ENCODE measurements at regions of chr13 and their contacts with region 1.

Region 1: DNA sequence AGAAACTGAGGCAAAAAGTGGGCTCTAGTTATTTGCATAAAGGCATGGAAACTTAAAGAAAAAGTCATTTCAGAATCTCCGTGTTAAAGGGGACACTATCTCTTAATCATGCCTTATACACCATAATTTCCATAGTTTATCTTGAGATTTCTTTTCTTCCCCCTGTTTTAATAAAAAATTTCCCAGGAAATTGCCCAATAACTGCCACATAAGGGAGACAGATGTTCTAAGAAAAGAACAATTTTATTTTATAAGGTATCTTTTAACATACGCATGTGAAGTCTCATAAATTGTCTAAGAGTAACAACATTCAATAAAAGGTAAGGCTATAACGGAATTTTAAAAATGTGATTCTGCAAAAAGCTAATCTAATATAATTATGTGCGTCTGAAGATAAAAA is 371.3 kb downstream of the IRS2 start:
- DNase-seq: no peak
- H3K27ac ChIP-seq: no peak overlapping the region
- CTCF ChIP-seq: no peak

Region 2: DNA sequence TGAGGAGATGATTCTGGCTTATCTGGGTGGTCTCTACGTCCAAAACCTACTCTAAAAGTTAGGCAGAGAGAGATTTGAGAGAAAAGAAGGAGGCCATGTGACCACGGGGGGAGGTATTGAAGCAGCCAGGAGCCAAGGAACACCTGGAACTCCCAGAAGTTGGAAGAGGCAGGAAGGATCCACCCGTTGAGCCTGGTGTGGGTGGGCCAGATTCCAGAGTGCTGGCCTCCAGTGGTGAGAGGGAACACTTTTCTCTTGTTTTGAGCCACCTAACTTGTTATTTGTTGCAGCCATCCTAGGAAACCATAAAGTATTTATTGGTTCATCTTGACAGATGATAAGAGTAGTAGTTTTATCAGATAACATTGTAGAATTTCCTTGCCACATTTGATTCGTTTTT is 388.8 kb before region 1 on chr13:
- CTCF ChIA-PET with region 1: no interaction called
- POLR2A ChIA-PET with region 1: no interaction called
- DNase-seq: no peak
- H3K27ac ChIP-seq: no peak overlapping the region
- CTCF ChIP-seq: no peak

Region 3: DNA sequence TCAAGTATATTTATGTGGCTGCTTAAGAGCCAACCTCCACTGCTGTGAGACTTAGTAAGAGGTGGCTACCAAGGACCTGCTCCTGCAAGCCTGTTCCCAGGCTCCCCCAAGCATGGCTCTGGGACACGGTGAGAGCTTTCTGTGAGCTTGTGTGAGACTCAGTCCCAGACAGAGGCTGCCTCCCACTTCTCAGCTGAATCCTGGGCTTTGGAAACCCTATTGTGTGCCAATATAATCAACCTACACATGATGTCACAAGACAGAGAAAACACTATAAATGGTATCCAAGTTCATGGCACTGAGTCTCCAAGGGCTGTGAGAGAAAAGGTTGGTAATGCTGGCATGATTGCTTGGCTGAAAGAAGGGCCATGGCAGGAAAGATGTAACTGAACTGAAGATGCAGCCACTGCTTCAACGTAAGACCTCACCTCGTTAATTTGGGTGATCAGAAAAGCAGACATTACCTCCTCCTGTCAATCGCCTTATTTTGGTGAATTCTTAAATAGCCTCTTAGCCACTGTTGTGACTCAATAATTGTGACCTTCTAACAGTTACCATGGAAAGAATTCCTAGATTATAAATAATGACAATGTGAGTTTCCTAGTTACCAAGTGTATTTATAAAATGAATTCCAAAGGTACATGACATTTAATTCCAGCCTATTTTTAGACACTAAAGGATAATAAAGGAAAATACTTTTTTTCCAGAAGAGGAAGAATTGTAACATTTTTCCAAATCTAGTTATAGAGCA is 39.3 kb after region 1 on chr13:
- CTCF ChIA-PET with region 1: interaction called, 10 read pairs
- POLR2A ChIA-PET with region 1: no interaction called
- DNase-seq: no peak
- H3K27ac ChIP-seq: no peak overlapping the region
- CTCF ChIP-seq: no peak

Region 4: GRCh38 chr13:109576309-109576813 is 161.3 kb after region 1 on chr13:
- CTCF ChIA-PET with region 1: no interaction called
- POLR2A ChIA-PET with region 1: no interaction called
- DNase-seq: no peak
- H3K27ac ChIP-seq: no peak overlapping the region
- CTCF ChIP-seq: no peak

Measured in RWPE1 (cell line).